ENCODE measurements at regions of chr12 and their contacts with region 1.

Region 1: GRCh38 chr12:9813821-9814809 is 13.2 kb upstream of the KLRF1 start:
- DNase-seq: peak; percentile 95
- ATAC-seq: peak; percentile 98
- H3K4me3 Mint-ChIP-seq: peak overlapping the region; percentile 86
- H3K27ac Mint-ChIP-seq: peak overlapping the region; percentile 82
- H3K4me1 Mint-ChIP-seq: peaks cover 27% of the 10 kb centered on the region
- H3K27me3 Mint-ChIP-seq: peaks cover 16% of the 10 kb centered on the region

Region 2: DNA sequence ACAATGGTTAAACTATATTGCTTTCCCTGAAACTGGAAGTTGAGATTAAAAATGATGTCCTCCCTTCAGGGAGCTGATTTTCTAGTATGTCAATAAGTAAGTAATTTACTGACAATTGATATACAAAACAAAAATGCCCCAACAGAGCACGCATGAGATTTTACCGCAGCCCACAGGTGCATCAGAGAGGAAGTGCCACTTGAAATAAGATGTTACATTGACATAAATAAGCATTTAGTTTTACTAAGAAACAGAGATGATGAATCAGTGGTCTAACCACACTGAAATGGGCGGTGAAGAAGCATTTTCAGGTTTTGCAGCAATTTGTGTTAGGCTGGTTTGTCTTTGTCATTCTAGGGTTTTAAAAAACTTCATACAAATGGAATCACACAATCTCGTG is 72.4 kb before region 1 on chr12:
- CTCF ChIA-PET with region 1: interaction called, 187 read pairs
- DNase-seq: peak; percentile 95
- ATAC-seq: peak; percentile 75
- H3K4me3 Mint-ChIP-seq: peak overlapping the region; percentile 77
- H3K27ac Mint-ChIP-seq: peak overlapping the region; percentile 99
- H3K4me1 Mint-ChIP-seq: peaks cover 72% of the 10 kb centered on the region
- H3K27me3 Mint-ChIP-seq: no peaks in the 10 kb centered on the region

Region 3: GRCh38 chr12:9797722-9798619 is 16.1 kb before region 1 on chr12:
- CTCF ChIA-PET with region 1: interaction called, 47 read pairs
- DNase-seq: peak; percentile 88
- ATAC-seq: peak; percentile 86
- H3K4me3 Mint-ChIP-seq: peak overlapping the region; percentile 6
- H3K27ac Mint-ChIP-seq: peak overlapping the region; percentile 23
- H3K4me1 Mint-ChIP-seq: peaks cover 46% of the 10 kb centered on the region
- H3K27me3 Mint-ChIP-seq: no peaks in the 10 kb centered on the region

Region 4: DNA sequence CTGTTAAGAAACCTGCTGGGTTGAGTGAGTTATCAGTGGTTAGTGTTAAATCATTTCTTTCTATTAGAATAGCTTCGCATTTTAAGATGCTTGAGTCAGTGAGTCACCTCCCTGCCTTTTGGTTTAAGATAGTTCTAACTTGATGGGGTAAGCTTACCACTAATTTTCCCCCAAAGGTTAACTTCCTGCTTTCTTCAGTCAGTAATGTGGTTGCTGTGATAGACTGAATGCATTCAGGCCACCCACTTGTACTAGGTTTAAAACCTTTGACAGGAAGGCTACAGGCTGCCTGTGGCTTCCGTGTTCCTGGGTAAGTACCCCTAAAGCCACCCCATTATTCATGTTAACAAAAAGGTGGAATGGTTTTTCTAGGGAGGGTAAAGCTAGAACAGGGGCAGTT is 92.8 kb after region 1 on chr12:
- CTCF ChIA-PET with region 1: interaction called, 22 read pairs
- DNase-seq: peak; percentile 73
- ATAC-seq: peak; percentile 96
- H3K4me3 Mint-ChIP-seq: peak overlapping the region; percentile 21
- H3K27ac Mint-ChIP-seq: peak overlapping the region; percentile 85
- H3K4me1 Mint-ChIP-seq: peaks cover 35% of the 10 kb centered on the region
- H3K27me3 Mint-ChIP-seq: no peaks in the 10 kb centered on the region

Region 5: DNA sequence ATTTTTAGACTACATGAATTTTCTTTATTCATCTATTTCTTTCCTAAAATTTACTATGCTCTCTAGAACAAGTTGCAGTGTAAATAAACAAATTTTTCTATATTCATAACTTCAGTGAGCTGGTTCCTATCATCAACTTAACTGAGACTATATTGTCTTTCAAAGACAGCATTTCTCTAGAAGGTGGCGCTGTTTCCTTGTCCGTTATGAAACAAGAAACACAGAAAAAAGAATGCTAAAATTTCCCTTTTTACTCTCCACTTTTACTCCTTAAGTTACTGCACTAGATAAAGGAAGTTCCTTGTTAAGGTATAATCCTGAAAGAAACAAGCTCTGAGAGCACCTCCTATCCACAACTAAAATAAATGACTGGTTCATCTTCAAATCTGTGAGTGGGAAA is 126.3 kb after region 1 on chr12:
- CTCF ChIA-PET with region 1: interaction called, 26 read pairs
- DNase-seq: no peak
- ATAC-seq: no peak
- H3K4me3 Mint-ChIP-seq: no peak overlapping the region
- H3K27ac Mint-ChIP-seq: no peak overlapping the region
- H3K4me1 Mint-ChIP-seq: peaks cover 15% of the 10 kb centered on the region
- H3K27me3 Mint-ChIP-seq: peaks cover 34% of the 10 kb centered on the region

Region 6: DNA sequence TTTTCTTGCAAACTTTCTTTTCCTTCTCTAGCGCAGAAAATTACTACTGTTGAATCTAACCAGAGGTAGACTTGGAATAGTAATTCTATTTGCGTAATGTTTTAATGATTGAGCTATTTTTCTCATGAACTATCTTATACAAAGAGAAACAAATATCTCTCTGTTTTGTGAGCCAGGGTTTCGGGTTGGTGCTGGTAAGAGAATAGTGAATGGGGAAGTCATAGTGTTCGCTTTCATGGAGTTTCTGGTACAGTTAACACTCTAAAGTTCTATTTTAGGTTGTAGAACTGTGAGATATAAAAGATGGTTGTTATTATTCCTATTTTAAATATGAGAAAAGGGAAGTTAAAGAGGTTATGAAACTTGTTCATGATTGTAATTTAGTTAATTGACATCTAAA is 178.2 kb after region 1 on chr12:
- CTCF ChIA-PET with region 1: no interaction called
- DNase-seq: no peak
- ATAC-seq: no peak
- H3K4me3 Mint-ChIP-seq: no peak overlapping the region
- H3K27ac Mint-ChIP-seq: no peak overlapping the region
- H3K4me1 Mint-ChIP-seq: no peaks in the 10 kb centered on the region
- H3K27me3 Mint-ChIP-seq: peaks cover 65% of the 10 kb centered on the region

Region 7: DNA sequence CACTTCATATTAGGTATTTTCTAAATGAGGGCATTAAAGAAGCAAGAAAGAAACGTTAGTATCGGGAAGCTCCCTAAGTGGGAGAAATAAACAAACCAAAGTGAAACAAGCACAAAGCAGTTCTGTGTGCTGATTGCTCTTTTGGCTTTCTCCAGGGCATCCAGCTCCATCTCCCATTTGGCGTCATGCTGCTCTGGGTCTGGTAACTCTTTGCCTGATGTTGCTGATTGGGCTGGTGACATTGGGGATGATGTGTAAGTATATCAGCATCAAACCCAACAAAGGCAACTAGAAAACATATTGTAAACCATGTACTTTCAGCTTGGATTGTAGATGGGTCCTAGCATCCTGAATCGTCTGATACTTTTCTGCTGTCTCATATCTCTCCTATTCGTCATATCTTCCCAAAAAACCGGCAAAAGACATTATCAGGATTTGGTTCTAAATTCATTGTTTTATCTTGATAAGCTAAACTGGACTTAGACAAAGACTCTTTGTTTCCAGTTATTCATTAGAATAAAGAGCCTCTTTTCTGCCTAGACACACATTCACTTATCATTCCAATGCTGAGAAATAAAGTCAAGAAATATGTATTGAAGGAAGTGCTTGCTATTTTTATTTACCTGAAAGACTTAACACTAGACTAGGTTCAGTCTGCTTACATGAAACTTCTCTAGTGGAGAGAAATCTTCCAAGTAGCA is 198.7 kb after region 1 on chr12:
- CTCF ChIA-PET with region 1: interaction called, 25 read pairs
- DNase-seq: no peak
- ATAC-seq: no peak
- H3K4me3 Mint-ChIP-seq: no peak overlapping the region
- H3K27ac Mint-ChIP-seq: no peak overlapping the region
- H3K4me1 Mint-ChIP-seq: no peaks in the 10 kb centered on the region
- H3K27me3 Mint-ChIP-seq: peaks cover 59% of the 10 kb centered on the region

Measured in activated CD8-positive, alpha-beta memory T cell treated with anti-CD3 and anti-CD28 coated beads, Interleukin-2, amount 10 ng/mL, durations not matched to agents 7 days and 5 days (primary cell).